Activated CD4-positive, alpha-beta T cell treated with anti-CD3 and anti-CD28 coated beads for 36 hours (primary cell): ENCODE measurements at regions of chr5 and their contacts with region 1.

Region 1: GRCh38 chr5:151771259-151772028 is at the start of gene G3BP1:
- DNase-seq: peak; percentile 100
- ATAC-seq: peak; percentile 84
- H3K4me3 Mint-ChIP-seq: no peak within 1 kb of the TSS
- H3K27ac Mint-ChIP-seq: peak within 1 kb of the TSS; percentile 73
- H3K4me1 Mint-ChIP-seq: peaks cover 32% of the 10 kb centered on the region
- H3K27me3 Mint-ChIP-seq: no peaks in the 10 kb centered on the region
- total RNA-seq, gene G3BP1: 253 to 280 TPM

Region 2: DNA sequence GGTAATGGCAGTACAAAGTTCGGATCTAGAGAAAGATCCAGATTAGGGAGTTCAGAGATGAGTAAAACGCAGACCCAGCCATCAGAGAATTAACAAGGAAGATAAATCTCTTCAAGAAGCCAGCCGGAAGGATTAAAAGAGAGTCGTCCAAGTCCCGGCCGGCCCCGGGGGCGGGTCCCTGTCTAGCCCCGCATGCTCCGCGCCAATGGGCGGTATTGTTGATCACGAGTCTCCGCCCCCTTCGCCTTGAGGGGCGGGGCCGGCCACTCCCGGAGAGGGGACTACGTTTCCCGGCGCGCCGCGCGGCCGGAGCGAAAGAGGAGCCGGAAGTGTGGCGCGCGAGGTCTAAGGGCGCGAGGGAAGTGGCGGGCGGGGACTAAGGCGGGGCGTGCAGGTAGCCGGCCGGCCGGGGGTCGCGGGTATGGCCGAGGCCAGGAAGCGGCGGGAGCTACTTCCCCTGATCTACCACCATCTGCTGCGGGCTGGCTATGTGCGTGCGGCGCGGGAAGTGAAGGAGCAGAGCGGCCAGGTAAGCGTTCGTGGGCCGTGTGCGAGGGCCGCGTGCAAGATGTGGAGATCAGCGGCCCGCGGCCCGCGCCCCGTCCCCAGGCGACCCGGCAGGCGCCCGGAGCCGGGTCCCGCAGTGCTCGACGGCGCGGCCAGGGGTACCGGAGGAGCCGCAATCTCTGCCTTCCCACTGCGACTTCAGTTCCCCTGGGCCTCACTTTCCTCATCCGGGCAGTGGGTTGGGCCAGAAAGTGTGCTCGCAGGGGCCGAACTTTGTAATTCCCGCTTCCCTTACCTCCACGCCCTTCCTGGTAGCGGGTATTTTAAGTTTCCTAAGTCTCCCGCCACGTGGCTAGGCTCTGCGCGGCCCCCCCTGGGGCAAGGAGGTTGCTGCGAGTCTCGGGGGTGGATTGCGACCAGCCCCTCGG is 1413.9 kb before region 1 on chr5 and contains the start of gene TCOF1:
- CTCF ChIA-PET with region 1: no interaction called
- POLR2A ChIA-PET with region 1: no interaction called
- intact Hi-C with region 1: loop called in 1 of 2 experiments (anchors 1 kb)
- DNase-seq: peak; percentile 99
- ATAC-seq: peak; percentile 99
- H3K4me3 Mint-ChIP-seq: peak within 1 kb of the TSS; percentile 87
- H3K27ac Mint-ChIP-seq: peak within 1 kb of the TSS; percentile 90
- H3K4me1 Mint-ChIP-seq: peaks cover 43% of the 10 kb centered on the region
- H3K27me3 Mint-ChIP-seq: no peaks in the 10 kb centered on the region
- total RNA-seq, gene TCOF1: 113 to 145 TPM

Region 3: GRCh38 chr5:151150471-151151262 is 620.8 kb before region 1 on chr5:
- CTCF ChIA-PET with region 1: interaction called, 4 read pairs
- POLR2A ChIA-PET with region 1: no interaction called
- intact Hi-C with region 1: loop called (anchors 2 to 10 kb)
- DNase-seq: peak; percentile 87
- ATAC-seq: peak; percentile 64
- H3K4me3 Mint-ChIP-seq: peak overlapping the region; percentile 46
- H3K27ac Mint-ChIP-seq: peak overlapping the region; percentile 89
- H3K4me1 Mint-ChIP-seq: peaks cover 94% of the 10 kb centered on the region
- H3K27me3 Mint-ChIP-seq: no peaks in the 10 kb centered on the region

Region 4: GRCh38 chr5:151213800-151214613 is 557.4 kb before region 1 on chr5:
- CTCF ChIA-PET with region 1: no interaction called
- POLR2A ChIA-PET with region 1: interaction called, 4 read pairs
- intact Hi-C with region 1: loop called in 1 of 2 experiments (anchors 5 kb)
- DNase-seq: peak; percentile 92
- ATAC-seq: peak; percentile 89
- H3K4me3 Mint-ChIP-seq: peak overlapping the region; percentile 74
- H3K27ac Mint-ChIP-seq: peak overlapping the region; percentile 97
- H3K4me1 Mint-ChIP-seq: peaks cover 83% of the 10 kb centered on the region
- H3K27me3 Mint-ChIP-seq: no peaks in the 10 kb centered on the region

Region 5: GRCh38 chr5:151659001-151659754 is 112.3 kb before region 1 on chr5:
- CTCF ChIA-PET with region 1: interaction called, 19 read pairs
- POLR2A ChIA-PET with region 1: interaction called, 10 read pairs
- intact Hi-C with region 1: loop called (anchors 1 kb)
- DNase-seq: peak; percentile 91
- ATAC-seq: peak; percentile 97
- H3K4me3 Mint-ChIP-seq: no peak overlapping the region
- H3K27ac Mint-ChIP-seq: no peak overlapping the region
- H3K4me1 Mint-ChIP-seq: peaks cover 14% of the 10 kb centered on the region
- H3K27me3 Mint-ChIP-seq: peaks cover 1% of the 10 kb centered on the region

Region 6: GRCh38 chr5:151758430-151759241 is 12.8 kb before region 1 on chr5 and contains the start of gene ATOX1:
- CTCF ChIA-PET with region 1: interaction called, 5 read pairs
- POLR2A ChIA-PET with region 1: interaction called, 28 read pairs
- intact Hi-C with region 1: loop called (anchors 1 kb)
- DNase-seq: peak; percentile 95
- ATAC-seq: peak; percentile 99
- H3K4me3 Mint-ChIP-seq: peak within 1 kb of the TSS; percentile 98
- H3K27ac Mint-ChIP-seq: peak within 1 kb of the TSS; percentile 98
- H3K4me1 Mint-ChIP-seq: peaks cover 33% of the 10 kb centered on the region
- H3K27me3 Mint-ChIP-seq: no peaks in the 10 kb centered on the region
- total RNA-seq, gene ATOX1: 74.8 to 85.9 TPM

Region 7: DNA sequence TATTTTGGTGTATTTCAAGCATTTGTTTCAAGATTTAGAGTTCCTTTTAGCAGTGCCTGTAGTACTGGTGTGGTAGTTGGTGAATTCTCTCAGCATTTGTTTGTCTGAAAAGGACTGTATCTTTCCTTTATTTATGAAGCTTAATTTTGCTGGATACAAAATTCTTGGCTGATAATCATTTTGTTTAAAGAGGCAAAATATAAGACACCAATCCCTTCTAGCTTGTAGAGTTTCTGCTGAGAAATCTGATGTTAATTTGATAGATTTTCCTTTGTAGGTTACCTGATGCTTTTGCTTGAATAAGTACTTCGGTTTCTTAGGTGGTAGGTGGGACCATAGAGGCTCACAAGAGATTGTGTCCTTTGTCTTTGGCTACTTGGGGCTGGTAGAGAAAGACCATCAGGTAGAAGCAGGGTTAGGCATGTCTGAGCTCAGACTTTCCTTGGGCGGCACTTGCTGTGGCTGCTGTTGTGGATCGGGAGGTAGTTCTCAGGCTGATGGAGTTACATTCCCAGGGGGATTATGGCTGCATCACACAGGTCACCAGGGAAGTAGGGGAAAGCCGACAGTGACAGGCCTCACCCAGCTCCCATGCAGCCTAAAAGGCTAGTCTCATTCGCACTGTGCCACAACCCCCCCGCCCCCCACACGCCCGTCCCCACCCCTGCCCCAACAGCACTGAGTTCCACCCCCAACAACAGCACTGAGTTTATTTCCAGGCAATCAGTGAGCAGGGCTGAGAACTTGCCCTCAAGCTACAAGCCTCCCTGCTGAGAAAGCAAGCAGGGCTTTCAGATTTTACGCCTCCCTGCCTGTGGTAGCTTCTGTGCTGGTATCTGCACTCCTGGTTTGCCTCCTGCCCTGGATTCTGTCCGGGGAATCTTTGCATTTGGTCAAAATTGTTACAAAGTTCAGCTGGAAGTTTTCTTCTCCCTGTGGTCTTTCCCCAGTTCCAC is 280.3 kb after region 1 on chr5:
- CTCF ChIA-PET with region 1: no interaction called
- POLR2A ChIA-PET with region 1: no interaction called
- intact Hi-C with region 1: no loop called
- DNase-seq: no peak
- ATAC-seq: no peak
- H3K4me3 Mint-ChIP-seq: no peak overlapping the region
- H3K27ac Mint-ChIP-seq: no peak overlapping the region
- H3K4me1 Mint-ChIP-seq: no peaks in the 10 kb centered on the region
- H3K27me3 Mint-ChIP-seq: no peaks in the 10 kb centered on the region